ENCODE measurements at regions of chr18 and their contacts with region 1.

Region 1: DNA sequence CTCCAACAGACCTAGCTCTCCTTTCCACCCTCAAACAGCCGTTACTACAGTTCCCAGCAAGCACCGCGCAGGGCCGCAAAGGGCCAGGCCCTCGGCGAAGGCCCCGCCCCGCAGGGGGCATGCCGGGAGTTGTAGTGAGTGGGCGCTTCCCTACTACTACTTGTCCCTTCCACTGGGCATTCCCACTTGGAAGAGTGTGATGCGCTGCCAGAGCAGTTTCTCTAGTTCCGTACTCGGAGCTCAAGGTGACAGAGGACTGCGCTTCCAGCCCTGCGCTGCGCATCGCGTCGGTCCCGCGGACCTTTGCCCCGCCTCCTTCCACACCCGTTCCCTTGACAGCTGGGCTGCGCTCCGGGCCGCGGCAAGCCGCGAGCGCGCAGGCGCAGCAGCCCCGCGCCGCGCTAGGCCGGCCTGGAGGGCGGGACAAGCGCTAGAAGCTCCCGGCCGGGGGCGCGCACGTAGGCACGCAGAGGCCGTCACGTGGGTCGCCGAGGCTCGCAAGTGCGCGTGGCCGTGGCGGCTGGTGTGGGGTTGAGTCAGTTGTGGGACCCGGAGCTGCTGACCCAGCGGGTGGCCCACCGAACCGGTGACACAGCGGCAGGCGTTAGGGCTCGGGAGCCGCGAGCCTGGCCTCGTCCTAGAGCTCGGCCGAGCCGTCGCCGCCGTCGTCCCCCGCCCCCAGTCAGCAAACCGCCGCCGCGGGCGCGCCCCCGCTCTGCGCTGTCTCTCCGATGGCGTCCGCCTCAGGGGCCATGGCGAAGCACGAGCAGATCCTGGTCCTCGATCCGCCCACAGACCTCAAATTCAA is at the start of gene VAPA:
- DNase-seq: peak; percentile 86
- ATAC-seq: peak; percentile 94
- H3K4me3 ChIP-seq: peak within 1 kb of the TSS; percentile 81 to 98 (median 96)
- H3K27ac ChIP-seq: peak within 1 kb of the TSS; percentile 96
- H3K4me1 ChIP-seq: peaks cover 37% of the 10 kb centered on the region
- H3K27me3 ChIP-seq: no peaks in the 10 kb centered on the region; a peak in 1 of 5 replicates
- CTCF ChIP-seq: no peak
- EP300 ChIP-seq: no peak
- POLR2A ChIP-seq: peak; percentile 90 to 93
- RAD21 ChIP-seq: peak; percentile 64
- total RNA-seq, gene VAPA: 294 and 375 TPM in 2 replicates

Region 2: GRCh38 chr18:8283891-8284585 is 1629.7 kb before region 1 on chr18:
- CTCF ChIA-PET with region 1: no interaction called
- POLR2A ChIA-PET with region 1: no interaction called
- in situ Hi-C with region 1: no loop called
- intact Hi-C with region 1: no loop called
- DNase-seq: peak; percentile 78
- ATAC-seq: peak; percentile 73
- H3K4me3 ChIP-seq: no peak overlapping the region
- H3K27ac ChIP-seq: no peak overlapping the region
- H3K4me1 ChIP-seq: peaks cover 12% of the 10 kb centered on the region
- H3K27me3 ChIP-seq: no peaks in the 10 kb centered on the region
- CTCF ChIP-seq: no peak
- EP300 ChIP-seq: peak in 1 of 2 experiments; percentile 45; a peak in 1 of 4 replicates
- POLR2A ChIP-seq: no peak
- RAD21 ChIP-seq: no peak

Region 3: GRCh38 chr18:9614401-9615279 is 299.1 kb before region 1 on chr18 and contains the start of gene PPP4R1:
- CTCF ChIA-PET with region 1: no interaction called
- POLR2A ChIA-PET with region 1: interaction called, 4 read pairs
- in situ Hi-C with region 1: no loop called
- intact Hi-C with region 1: loop called (anchors 5 kb)
- DNase-seq: peak; percentile 33
- ATAC-seq: peak; percentile 73
- H3K4me3 ChIP-seq: peak within 1 kb of the TSS; percentile 93 to 99 (median 94)
- H3K27ac ChIP-seq: peak within 1 kb of the TSS; percentile 81
- H3K4me1 ChIP-seq: peaks cover 59% of the 10 kb centered on the region
- H3K27me3 ChIP-seq: no peaks in the 10 kb centered on the region
- CTCF ChIP-seq: no peak
- EP300 ChIP-seq: no peak
- POLR2A ChIP-seq: peak; percentile 42 to 61
- RAD21 ChIP-seq: peak; percentile 49; the same call in 1 of the 2 replicates
- total RNA-seq, gene PPP4R1: 66.5 and 84.6 TPM in 2 replicates

Region 4: DNA sequence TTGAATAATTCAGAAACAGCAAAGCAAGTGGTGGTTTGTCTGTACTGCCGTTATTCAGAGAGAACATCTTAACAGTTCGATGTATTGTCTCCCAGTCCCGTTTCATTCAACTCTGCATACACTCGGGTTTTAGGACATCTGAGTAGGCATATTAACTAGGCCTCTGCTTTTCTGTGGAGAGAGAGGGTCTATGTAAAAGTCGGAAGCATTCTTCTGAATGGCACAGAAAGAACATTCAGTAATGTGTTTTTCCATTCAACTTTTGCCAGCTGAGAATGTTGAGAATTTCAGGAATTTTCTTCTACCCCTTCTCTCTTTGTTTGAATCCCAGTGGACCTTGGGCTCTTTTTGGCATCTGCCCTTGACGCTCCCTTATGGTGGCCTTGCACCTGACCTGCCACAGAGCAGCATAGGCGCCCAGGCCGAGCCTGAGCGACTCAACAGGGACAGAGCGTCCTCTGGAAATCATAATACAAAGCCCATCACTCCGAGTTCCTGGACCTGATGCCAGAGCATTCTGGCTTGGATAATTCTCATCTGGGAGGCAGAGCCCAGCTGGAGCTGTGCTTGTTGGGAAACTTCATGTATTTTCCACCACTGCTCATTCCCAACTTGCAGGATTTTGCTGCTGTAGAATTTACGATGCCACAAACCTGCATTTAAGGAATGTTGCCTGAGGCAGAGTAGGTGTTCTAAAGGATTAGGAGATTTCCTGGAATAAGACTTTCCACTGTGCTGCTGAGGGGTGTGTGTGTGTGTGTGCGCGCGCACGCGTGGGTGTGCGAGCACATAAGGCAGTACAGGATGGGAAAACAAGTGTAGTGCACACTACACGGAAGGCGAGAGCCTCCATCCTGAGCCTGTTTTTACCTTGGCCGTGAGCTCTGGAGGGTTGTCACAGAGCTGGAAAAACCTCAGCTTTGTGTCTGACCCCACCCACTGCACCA is 105.2 kb before region 1 on chr18:
- CTCF ChIA-PET with region 1: no interaction called
- POLR2A ChIA-PET with region 1: interaction called, 25 read pairs
- in situ Hi-C with region 1: no loop called
- intact Hi-C with region 1: loop called (anchors 5 kb)
- DNase-seq: peak; percentile 89
- ATAC-seq: peak; percentile 82
- H3K4me3 ChIP-seq: peak overlapping the region in 2 of 3 experiments; percentile 6 to 32; a peak in 3 of 6 replicates
- H3K27ac ChIP-seq: peak overlapping the region; percentile 31
- H3K4me1 ChIP-seq: peaks cover 69% of the 10 kb centered on the region
- H3K27me3 ChIP-seq: no peaks in the 10 kb centered on the region; a peak in 1 of 5 replicates
- CTCF ChIP-seq: peak; percentile 16; the same call in 1 of the 2 replicates
- EP300 ChIP-seq: peak in 1 of 2 experiments; percentile 82; a peak in 2 of 4 replicates
- POLR2A ChIP-seq: no peak
- RAD21 ChIP-seq: peak; percentile 18

Region 5: DNA sequence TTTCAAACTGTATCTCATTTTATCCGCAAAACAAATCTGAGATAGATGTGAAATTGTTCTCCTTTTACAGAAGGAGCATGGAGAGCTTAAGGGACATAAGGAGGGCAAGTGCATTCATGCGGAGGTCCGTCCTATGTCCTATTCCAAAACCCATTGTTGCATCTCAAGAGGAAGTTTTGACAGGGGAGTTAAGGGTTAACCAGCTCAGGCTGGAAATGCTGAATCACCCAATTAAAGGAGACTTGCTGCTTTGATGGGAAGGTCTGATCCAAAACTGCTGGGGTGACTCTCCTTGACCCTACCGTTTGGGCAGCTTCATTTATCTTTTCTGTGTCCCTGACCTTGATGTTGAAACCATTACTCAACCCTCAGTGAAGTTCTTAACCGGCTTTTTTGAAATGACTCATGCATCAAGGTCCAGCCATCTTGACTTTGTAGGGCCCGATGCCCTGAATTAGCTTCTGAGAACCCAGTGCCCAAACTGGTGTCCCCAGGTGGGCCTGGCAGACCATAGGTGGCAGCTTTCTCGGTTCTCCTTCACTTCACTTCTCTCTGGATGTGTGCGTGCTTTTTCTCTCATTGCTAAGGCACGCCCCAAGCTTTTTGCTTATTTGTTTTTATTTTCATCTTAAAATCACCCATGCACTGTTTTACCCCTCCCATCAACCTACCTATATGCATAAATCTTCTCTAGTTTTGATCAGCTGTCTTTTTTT is 43.9 kb before region 1 on chr18:
- CTCF ChIA-PET with region 1: no interaction called
- POLR2A ChIA-PET with region 1: interaction called, 19 read pairs
- in situ Hi-C with region 1: no loop called
- intact Hi-C with region 1: no loop called
- DNase-seq: peak; percentile 95
- ATAC-seq: peak; percentile 87
- H3K4me3 ChIP-seq: no peak overlapping the region
- H3K27ac ChIP-seq: peak overlapping the region; percentile 51
- H3K4me1 ChIP-seq: peaks cover 29% of the 10 kb centered on the region
- H3K27me3 ChIP-seq: no peaks in the 10 kb centered on the region; a peak in 1 of 5 replicates
- CTCF ChIP-seq: no peak
- EP300 ChIP-seq: peak; percentile 74 to 97
- POLR2A ChIP-seq: no peak
- RAD21 ChIP-seq: 0 out of 2 replicates have a peak, but pooled peaks have one; percentile 16

Region 6: DNA sequence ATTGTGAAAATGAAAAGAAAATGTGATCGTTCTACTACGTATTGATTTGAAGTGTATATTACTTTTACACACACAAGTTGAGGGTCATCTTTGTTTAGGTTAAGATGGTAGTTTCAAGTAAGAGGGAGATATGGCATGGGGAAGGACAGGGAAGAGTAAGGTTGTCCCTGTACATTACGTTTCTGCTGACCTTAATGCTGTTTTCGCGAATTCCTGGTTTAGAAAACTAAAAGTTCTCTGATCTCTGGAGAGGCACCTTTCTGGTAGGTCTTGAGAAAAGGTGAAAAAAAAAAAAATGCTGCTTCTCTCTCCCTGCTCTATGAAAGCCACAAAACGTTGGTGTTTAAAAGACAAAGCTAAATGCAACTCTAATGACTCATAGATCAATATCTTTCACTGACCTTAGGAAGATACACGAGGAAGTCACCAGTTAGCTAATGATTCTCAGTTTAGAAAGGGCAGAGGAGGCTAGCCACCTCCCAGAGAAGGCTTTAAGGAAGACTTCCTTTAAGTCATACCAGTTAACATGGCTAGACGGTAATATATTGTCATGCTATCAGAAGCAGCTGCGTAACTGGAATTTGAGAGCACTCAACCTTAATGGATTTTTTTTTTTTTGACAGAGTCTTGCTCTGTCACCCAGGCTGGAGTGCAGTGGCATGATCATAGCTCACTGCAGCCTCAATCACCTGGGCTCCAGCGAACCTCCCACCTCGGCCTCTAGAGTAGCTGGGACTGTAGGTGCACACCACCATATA is 14.8 kb before region 1 on chr18:
- CTCF ChIA-PET with region 1: no interaction called
- POLR2A ChIA-PET with region 1: interaction called, 19 read pairs
- in situ Hi-C with region 1: no loop called
- intact Hi-C with region 1: no loop called
- DNase-seq: peak; percentile 75
- ATAC-seq: peak; percentile 92
- H3K4me3 ChIP-seq: peak overlapping the region in 1 of 3 experiments; percentile 30; a peak in 1 of 6 replicates
- H3K27ac ChIP-seq: peak overlapping the region; percentile 29
- H3K4me1 ChIP-seq: peaks cover 25% of the 10 kb centered on the region
- H3K27me3 ChIP-seq: no peaks in the 10 kb centered on the region
- CTCF ChIP-seq: no peak
- EP300 ChIP-seq: peak in 1 of 2 experiments; percentile 58; a peak in 1 of 4 replicates
- POLR2A ChIP-seq: 0 out of 4 replicates have a peak, but pooled peaks of 1 of the 2 experiments have one; percentile 20
- RAD21 ChIP-seq: no peak

Region 7: DNA sequence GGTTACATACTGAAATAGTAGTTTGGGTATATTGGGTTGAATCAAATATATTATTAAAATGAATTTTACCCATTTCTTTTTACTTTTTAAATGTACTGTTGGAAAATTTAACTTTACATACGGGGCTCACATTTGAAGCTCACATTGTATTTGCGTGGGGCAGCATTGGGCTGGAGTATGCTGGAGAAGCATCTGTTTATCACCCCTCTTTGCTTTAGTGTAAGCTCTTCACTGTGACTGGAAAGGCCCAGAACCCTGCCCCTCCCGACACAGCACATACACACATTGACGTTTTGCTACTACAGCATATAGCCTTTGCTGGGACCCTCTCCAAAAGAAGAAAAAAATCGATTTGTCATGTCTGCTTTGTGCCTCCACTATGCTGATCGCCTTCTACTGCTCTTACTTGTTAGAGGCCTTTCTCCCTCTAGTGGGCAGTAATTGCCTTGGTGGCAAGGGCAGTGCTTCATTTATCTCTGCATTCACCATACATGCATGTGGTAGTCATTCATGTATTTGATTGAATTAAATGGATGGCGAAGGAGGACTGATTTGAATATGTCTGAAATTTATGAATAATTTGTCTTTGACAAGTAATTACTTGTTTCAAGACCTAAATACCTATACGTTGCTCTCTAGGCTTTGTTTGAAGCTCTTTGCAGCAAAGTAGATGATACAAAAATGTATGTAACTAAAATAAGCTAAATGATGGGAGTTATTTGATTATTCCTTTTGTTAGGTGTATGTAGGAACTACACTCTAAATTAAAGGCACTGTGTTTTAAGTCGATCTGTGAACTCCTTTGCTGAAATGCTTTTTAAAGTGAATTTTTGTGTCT is 37.5 kb after region 1 on chr18:
- CTCF ChIA-PET with region 1: no interaction called
- POLR2A ChIA-PET with region 1: no interaction called
- in situ Hi-C with region 1: no loop called
- intact Hi-C with region 1: loop called (anchors 2 kb)
- DNase-seq: peak; percentile 59
- ATAC-seq: peak; percentile 87
- H3K4me3 ChIP-seq: no peak overlapping the region
- H3K27ac ChIP-seq: no peak overlapping the region
- H3K4me1 ChIP-seq: peaks cover 15% of the 10 kb centered on the region
- H3K27me3 ChIP-seq: no peaks in the 10 kb centered on the region
- CTCF ChIP-seq: peak; percentile 68
- EP300 ChIP-seq: no peak
- POLR2A ChIP-seq: no peak
- RAD21 ChIP-seq: peak; percentile 40; the same call in 1 of the 2 replicates

Measured in HepG2 (cell line).